HEK293 (cell line): ENCODE measurements at regions of chr1 and their contacts with region 1.

Region 1: GRCh38 chr1:27284425-27285273 is 37.3 kb upstream of the TMEM222 start:
- H3K4me3 ChIP-seq: no peak overlapping the region
- H3K27ac ChIP-seq: no peak overlapping the region
- H3K4me1 ChIP-seq: no peaks in the 10 kb centered on the region
- CTCF ChIP-seq: peak; percentile 49

Region 2: DNA sequence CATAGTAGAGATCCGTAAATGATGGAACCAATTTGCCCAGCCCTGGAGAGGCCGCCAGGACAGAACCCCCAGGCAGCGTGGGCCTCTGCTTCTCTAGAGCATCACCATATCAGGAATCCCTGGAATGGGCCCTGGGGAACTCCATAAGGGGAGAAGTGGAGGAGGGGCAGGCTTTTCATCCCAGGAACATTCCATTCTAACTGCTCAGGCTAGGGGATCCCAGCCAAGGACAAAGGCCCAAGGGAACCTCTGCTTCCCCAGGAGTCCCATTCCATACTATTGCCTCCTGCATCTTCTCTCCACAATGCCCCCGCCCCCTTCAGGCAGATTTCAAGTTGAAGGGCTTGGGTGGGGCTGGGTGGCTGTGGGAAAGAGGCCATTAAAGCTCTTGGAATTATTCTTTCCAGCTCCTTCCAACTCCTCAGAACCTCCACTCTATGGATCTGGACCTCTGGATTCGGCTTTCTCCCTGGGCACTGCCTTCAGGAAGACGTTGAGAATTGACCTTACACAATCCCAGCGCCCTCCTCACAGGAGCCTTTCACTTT is 285.1 kb before region 1 on chr1:
- CTCF ChIA-PET with region 1: interaction called, 10 read pairs
- POLR2A ChIA-PET with region 1: no interaction called
- H3K4me3 ChIP-seq: no peak overlapping the region
- H3K27ac ChIP-seq: no peak overlapping the region
- H3K4me1 ChIP-seq: no peaks in the 10 kb centered on the region; the same call in 1 of the 2 replicates
- CTCF ChIP-seq: no peak

Region 3: GRCh38 chr1:27102707-27103491 is 181.8 kb before region 1 on chr1:
- CTCF ChIA-PET with region 1: interaction called, 88 read pairs
- POLR2A ChIA-PET with region 1: no interaction called
- H3K4me3 ChIP-seq: no peak overlapping the region
- H3K27ac ChIP-seq: no peak overlapping the region
- H3K4me1 ChIP-seq: peaks cover 8% of the 10 kb centered on the region
- CTCF ChIP-seq: peak; percentile 94

Region 4: DNA sequence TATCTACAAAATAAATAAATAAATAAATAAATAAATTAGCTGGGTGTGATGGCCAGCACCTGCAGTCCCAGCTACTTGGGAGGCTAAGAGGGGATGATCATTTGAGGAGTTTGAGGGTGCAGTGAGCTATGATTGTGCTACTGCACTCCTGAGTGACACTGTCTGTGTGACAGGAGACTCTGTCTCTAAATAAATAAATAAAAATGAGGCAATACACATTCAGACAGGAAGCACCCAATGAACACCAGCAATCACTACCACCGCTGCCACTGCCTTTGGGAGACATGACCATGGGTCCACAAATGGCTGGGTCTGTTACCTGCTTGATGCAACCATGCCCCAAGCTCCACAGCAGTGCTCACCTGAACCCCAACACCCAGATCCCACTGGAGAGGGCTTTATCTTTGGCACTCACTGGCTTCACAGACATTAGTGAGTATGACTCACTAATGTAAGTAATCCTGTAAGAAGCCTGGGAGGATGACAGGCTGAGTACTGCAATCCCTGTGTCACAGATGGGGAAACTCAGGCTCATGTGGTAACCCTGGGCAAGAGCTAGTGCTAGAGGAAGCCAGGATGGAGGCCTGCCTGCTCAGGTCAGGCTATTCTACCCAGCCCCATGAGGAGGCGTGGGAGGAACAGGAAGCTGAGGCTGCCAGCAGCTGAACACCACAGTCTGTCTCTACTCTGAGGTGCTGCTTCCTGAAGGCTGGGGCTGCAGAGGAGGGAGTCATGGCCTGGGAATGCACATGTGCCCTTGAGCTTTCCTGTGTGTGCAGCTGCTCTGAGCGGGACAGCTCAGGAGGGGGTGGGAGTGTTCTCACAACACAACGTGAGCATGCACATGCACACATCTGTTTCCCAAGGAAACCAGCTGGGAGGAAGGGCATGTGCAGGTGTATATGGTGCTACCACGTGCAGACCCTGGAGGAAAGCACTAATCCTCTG is 172.7 kb before region 1 on chr1:
- CTCF ChIA-PET with region 1: interaction called, 13 read pairs
- POLR2A ChIA-PET with region 1: no interaction called
- H3K4me3 ChIP-seq: no peak overlapping the region
- H3K27ac ChIP-seq: no peak overlapping the region
- H3K4me1 ChIP-seq: no peaks in the 10 kb centered on the region
- CTCF ChIP-seq: no peak

Region 5: DNA sequence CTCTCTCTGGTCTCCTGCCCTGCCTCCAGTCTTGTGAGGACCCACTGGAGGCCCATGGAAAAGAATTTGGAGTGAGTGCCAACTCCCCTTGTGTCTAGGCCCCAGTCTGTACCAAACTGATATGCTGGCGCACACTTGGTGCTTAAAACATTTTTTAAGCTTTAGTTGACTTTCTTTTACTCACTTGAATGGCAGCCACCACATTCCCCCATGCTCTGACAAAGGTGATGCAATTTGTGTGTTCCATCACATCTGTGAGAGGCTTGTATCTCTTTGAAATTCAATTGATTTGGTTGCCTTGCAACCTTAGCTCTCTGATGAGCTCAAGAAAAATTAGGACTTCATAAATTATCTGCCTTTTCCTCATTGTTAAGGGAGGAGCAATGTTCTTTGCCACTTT is 80.7 kb before region 1 on chr1:
- CTCF ChIA-PET with region 1: interaction called, 14 read pairs
- POLR2A ChIA-PET with region 1: no interaction called
- H3K4me3 ChIP-seq: no peak overlapping the region
- H3K27ac ChIP-seq: no peak overlapping the region
- H3K4me1 ChIP-seq: no peaks in the 10 kb centered on the region
- CTCF ChIP-seq: no peak

Region 6: DNA sequence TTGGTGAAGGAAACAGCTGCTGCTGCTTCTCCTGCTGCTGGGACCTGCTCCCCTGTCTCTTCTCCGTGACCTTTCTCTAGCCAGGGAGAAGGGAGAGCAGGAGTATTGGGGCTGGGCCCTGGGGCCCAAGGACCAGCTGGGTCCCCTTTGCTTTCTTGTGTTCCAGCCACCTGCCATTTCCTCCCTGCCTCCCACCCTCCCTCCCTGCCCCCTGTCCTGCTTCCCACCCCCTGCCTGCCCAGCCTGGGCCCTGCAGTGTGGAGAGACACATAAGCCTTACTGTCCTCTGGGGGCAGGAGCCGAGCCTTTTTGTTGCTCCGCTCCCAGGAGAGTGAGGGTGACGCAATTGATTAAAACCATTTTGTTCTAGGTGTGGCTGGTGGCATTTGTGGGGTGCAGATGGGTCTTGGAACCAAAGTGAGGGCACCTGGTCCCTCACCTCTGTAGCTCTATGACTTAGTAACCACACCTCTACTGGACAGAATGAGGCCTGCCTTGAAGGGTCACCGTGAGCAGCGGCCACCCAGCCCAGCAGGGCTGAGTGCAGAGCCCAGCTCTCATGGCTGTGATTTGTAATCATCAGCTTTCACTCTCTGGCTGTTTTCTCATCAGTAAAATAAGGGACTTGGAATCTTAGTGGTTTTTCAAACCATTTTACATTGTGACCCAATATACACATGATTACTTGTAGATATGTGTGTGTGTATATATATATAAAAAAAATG is 23.4 kb after region 1 on chr1:
- CTCF ChIA-PET with region 1: no interaction called
- POLR2A ChIA-PET with region 1: no interaction called
- H3K4me3 ChIP-seq: no peak overlapping the region
- H3K27ac ChIP-seq: no peak overlapping the region
- H3K4me1 ChIP-seq: no peaks in the 10 kb centered on the region
- CTCF ChIP-seq: no peak

Region 7: DNA sequence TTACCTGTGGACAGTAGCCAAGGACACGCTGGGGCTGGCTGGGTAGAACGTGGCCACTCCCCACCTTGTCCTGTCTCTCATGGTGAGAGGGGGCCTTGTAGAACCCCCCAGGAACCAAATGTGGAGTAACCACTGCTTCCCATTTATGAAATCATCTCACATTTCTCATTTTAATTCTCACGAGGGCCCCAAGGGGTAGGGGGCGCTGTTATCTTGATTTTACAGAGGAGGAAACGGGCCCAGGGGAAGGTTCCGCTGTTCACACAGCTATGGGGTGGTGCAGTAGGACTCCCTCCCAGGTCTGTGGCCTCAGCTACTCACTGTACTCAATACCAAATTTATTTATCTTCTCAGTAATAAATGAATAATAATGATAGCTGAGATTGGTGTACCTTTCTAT is 655.6 kb after region 1 on chr1:
- CTCF ChIA-PET with region 1: no interaction called
- POLR2A ChIA-PET with region 1: no interaction called
- H3K4me3 ChIP-seq: no peak overlapping the region
- H3K27ac ChIP-seq: no peak overlapping the region
- H3K4me1 ChIP-seq: peaks cover under 1% of the 10 kb centered on the region; the same call in 1 of the 2 replicates
- CTCF ChIP-seq: no peak